ENCODE measurements at regions of chr3 and their contacts with region 1.

Region 1: GRCh38 chr3:20232906-20233780 is 47.1 kb upstream of the SGO1 start:
- DNase-seq: no peak
- H3K4me3 ChIP-seq: no peak overlapping the region
- H3K27ac ChIP-seq: no peak overlapping the region
- H3K4me1 ChIP-seq: no peaks in the 10 kb centered on the region
- H3K27me3 ChIP-seq: no peaks in the 10 kb centered on the region
- CTCF ChIP-seq: no peak
- EP300 ChIP-seq: no peak
- POLR2A ChIP-seq: no peak

Region 2: GRCh38 chr3:19284974-19285373 is 948.2 kb before region 1 on chr3:
- in situ Hi-C with region 1: no loop called
- intact Hi-C with region 1: loop called (anchors 5 kb)
- DNase-seq: no peak
- H3K4me3 ChIP-seq: no peak overlapping the region
- H3K27ac ChIP-seq: no peak overlapping the region
- H3K4me1 ChIP-seq: no peaks in the 10 kb centered on the region
- H3K27me3 ChIP-seq: no peaks in the 10 kb centered on the region
- CTCF ChIP-seq: no peak
- EP300 ChIP-seq: no peak
- POLR2A ChIP-seq: no peak

Region 3: GRCh38 chr3:20104167-20104661 is 128.9 kb before region 1 on chr3:
- in situ Hi-C with region 1: no loop called
- intact Hi-C with region 1: no loop called
- DNase-seq: peak; percentile 16
- H3K4me3 ChIP-seq: no peak overlapping the region
- H3K27ac ChIP-seq: no peak overlapping the region
- H3K4me1 ChIP-seq: no peaks in the 10 kb centered on the region
- H3K27me3 ChIP-seq: no peaks in the 10 kb centered on the region
- CTCF ChIP-seq: no peak
- EP300 ChIP-seq: no peak
- POLR2A ChIP-seq: no peak

Region 4: DNA sequence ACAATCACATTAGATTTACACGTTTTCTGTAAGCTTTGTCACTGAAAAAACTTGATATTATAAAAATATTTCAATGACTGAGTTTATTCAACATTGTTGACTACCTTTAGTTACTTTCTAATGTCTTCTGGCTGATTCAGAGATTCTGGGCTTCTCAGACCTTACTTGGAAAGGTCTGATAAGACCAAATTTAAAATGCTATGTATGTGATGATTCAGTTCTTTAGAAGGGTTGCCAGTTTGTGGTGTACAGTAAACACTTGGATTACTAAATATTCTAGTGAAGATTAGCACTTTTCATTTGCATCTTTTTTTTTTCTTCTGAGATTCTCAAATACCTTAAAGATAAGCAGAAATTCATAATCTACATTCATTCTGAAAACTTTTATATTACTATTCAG is 96.9 kb before region 1 on chr3:
- in situ Hi-C with region 1: no loop called
- intact Hi-C with region 1: no loop called
- DNase-seq: no peak
- H3K4me3 ChIP-seq: no peak overlapping the region
- H3K27ac ChIP-seq: no peak overlapping the region
- H3K4me1 ChIP-seq: no peaks in the 10 kb centered on the region
- H3K27me3 ChIP-seq: no peaks in the 10 kb centered on the region
- CTCF ChIP-seq: no peak
- EP300 ChIP-seq: no peak
- POLR2A ChIP-seq: no peak

Region 5: GRCh38 chr3:20344400-20344959 is 111.3 kb after region 1 on chr3:
- in situ Hi-C with region 1: no loop called
- intact Hi-C with region 1: no loop called
- DNase-seq: no peak
- H3K4me3 ChIP-seq: no peak overlapping the region
- H3K27ac ChIP-seq: no peak overlapping the region
- H3K4me1 ChIP-seq: no peaks in the 10 kb centered on the region
- H3K27me3 ChIP-seq: no peaks in the 10 kb centered on the region
- CTCF ChIP-seq: no peak
- EP300 ChIP-seq: no peak
- POLR2A ChIP-seq: no peak